Tibial artery (tissue), 4 donors: ENCODE measurements at regions of chr17 and their contacts with region 1.

Region 1: DNA sequence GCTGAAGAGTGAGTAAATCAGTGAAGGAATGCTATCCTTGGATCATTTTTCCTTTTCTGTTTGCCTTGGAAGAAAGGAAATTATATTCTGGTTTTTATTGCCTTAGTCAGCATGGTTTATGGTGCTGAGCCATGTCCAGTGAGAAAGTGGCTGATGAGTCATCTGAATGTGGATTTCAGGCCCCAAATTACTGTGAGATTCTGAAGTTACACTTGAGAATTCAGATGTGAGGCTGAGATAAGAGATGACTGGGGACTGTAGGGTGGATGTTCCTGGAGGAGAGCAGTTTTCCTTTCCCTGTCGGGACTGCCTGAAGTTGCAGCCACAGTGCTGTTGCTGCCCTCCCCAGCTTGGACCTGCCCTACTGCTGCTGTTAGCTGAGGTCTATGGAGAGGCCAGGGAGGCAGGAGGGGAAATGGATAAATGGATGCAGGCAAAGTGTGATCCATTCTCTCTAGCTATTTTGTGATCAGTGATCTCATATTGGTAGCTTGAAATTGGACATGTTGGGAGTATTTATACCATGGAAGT is 4.2 kb upstream of the MAP3K14 start:
- DNase-seq: peak in 1 of 2 donors; percentile 45
- H3K4me3 ChIP-seq: no peak overlapping the region
- H3K27ac ChIP-seq: peak overlapping the region; percentile 52 to 53
- H3K4me1 ChIP-seq: peaks cover 0 to 38% (median 26%) of the 10 kb centered on the region in 4 donors
- H3K27me3 ChIP-seq: no peaks in the 10 kb centered on the region
- CTCF ChIP-seq: no peak

Region 2: GRCh38 chr17:45284176-45285140 is 36.5 kb before region 1 on chr17:
- intact Hi-C with region 1: loop called (anchors 5 kb)
- DNase-seq: no peak
- H3K4me3 ChIP-seq: no peak overlapping the region
- H3K27ac ChIP-seq: no peak overlapping the region
- H3K4me1 ChIP-seq: peaks cover 0 to 6% (median 0%) of the 10 kb centered on the region in 4 donors
- H3K27me3 ChIP-seq: no peaks in the 10 kb centered on the region
- CTCF ChIP-seq: no peak